ENCODE measurements at regions of chr19 and their contacts with region 1.

Region 1: DNA sequence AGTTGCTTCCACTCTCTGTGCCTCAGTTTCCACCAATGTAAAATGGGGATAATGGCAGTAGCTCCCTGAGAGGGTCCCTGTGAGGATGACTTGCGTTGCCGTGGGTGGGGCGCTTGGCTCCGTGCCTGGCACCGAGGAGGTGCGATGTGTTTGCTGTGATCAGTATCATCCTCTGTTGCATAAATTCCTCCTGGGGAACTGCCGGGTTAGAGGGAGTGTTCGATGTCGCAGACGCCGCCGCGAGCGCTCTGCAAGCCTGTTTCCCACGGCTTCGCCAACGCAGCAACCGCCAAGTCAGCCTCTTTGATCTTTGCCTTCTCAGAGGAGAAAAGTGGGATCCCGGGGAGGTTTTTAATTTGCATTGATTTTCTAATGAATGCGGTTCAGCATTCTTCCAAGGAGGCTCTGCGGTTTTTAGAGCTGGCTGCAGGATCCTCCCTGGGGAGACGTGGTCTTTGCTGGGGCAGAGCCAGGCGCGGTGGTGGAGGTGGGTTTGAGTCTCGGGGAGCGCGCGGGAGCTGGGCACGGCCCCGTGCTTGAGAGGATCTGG is 7.6 kb downstream of the GPR32 start:
- DNase-seq: no peak
- H3K4me3 ChIP-seq: no peak overlapping the region
- H3K27ac ChIP-seq: no peak overlapping the region
- H3K4me1 ChIP-seq: no peaks in the 10 kb centered on the region
- H3K27me3 ChIP-seq: peaks cover 91% of the 10 kb centered on the region
- CTCF ChIP-seq: no peak

Region 2: GRCh38 chr19:50357178-50358100 is 420.4 kb before region 1 on chr19:
- CTCF ChIA-PET with region 1: no interaction called
- POLR2A ChIA-PET with region 1: no interaction called
- intact Hi-C with region 1: loop called (anchors 2 kb)
- DNase-seq: peak; percentile 45 to 64
- H3K4me3 ChIP-seq: no peak overlapping the region
- H3K27ac ChIP-seq: no peak overlapping the region
- H3K4me1 ChIP-seq: no peaks in the 10 kb centered on the region
- H3K27me3 ChIP-seq: peaks cover 7% of the 10 kb centered on the region
- CTCF ChIP-seq: peak; percentile 94

Region 3: GRCh38 chr19:50537762-50538230 is 240.0 kb before region 1 on chr19:
- CTCF ChIA-PET with region 1: interaction called, 6 read pairs
- POLR2A ChIA-PET with region 1: no interaction called
- intact Hi-C with region 1: loop called (anchors 5 kb)
- DNase-seq: peak; percentile 66 to 79
- H3K4me3 ChIP-seq: no peak overlapping the region
- H3K27ac ChIP-seq: no peak overlapping the region
- H3K4me1 ChIP-seq: no peaks in the 10 kb centered on the region
- H3K27me3 ChIP-seq: peaks cover 71% of the 10 kb centered on the region
- CTCF ChIP-seq: peak; percentile 86

Region 4: DNA sequence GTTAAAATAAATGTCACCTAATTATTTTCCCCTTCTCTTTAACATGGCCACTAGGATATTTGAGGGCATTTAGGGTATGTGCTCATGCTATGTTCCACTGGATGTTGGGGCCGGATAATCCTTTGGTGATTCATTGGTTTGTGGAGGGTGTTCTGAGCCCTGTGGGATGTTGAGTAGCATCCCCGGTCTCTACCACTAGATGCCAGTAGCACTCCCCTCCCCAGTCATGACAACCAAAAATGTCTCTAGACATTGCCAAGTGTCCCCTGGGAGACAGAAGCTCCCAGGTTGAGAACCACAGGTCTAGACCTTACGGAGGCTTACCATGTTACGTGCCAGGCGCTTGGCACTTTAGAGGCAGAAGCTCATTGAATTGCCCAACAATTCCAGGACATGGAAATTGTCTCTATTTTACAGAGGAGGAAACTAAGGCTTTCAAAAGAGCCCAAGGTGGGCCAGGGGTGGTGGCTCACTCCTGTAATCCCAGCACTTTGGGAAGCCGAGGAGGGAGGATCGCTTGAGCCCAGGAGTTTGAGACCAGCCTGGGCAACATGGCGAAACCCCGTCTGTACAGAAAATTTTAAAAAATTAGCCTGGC is 72.3 kb before region 1 on chr19:
- CTCF ChIA-PET with region 1: interaction called, 3 read pairs
- POLR2A ChIA-PET with region 1: no interaction called
- intact Hi-C with region 1: loop called (anchors 1 kb)
- DNase-seq: peak; percentile 49 to 55
- H3K4me3 ChIP-seq: no peak overlapping the region
- H3K27ac ChIP-seq: no peak overlapping the region
- H3K4me1 ChIP-seq: no peaks in the 10 kb centered on the region
- H3K27me3 ChIP-seq: peaks cover 91% of the 10 kb centered on the region
- CTCF ChIP-seq: peak; percentile 75